Activated naive CD4-positive, alpha-beta T cell treated with anti-CD3 and anti-CD28 coated beads for 36 hours (primary cell): ENCODE measurements at regions of chr13 and their contacts with region 1.

Region 1: GRCh38 chr13:59677966-59678814 is 485.5 kb downstream of the DIAPH3 start:
- DNase-seq: peak; percentile 5
- H3K4me3 Mint-ChIP-seq: no peak overlapping the region
- H3K27ac Mint-ChIP-seq: no peak overlapping the region
- H3K4me1 Mint-ChIP-seq: peaks cover under 1% of the 10 kb centered on the region
- H3K27me3 Mint-ChIP-seq: no peaks in the 10 kb centered on the region

Region 2: DNA sequence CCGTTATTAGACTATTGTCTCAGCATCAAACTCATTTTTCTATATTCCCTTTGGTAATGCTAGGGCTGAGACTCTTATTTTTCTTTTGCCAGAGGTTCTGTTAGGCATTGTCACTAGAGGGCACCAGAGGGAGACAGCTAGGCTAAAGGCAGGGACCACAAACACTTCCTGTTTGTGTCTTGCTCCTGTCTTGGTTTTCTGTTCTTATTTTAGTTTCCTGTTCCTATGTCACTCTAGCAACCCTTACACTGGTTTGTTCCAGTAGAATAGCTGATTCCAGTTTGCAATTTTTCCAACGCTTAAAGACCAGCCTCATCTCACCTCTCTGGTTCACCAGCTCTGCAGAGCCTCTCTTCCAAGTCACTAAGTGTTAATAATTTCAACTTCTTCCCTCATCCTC is 286.5 kb before region 1 on chr13:
- CTCF ChIA-PET with region 1: interaction called, 20 read pairs
- intact Hi-C with region 1: loop called (anchors 1 kb)
- DNase-seq: peak; percentile 72
- H3K4me3 Mint-ChIP-seq: no peak overlapping the region
- H3K27ac Mint-ChIP-seq: no peak overlapping the region
- H3K4me1 Mint-ChIP-seq: no peaks in the 10 kb centered on the region
- H3K27me3 Mint-ChIP-seq: no peaks in the 10 kb centered on the region

Region 3: DNA sequence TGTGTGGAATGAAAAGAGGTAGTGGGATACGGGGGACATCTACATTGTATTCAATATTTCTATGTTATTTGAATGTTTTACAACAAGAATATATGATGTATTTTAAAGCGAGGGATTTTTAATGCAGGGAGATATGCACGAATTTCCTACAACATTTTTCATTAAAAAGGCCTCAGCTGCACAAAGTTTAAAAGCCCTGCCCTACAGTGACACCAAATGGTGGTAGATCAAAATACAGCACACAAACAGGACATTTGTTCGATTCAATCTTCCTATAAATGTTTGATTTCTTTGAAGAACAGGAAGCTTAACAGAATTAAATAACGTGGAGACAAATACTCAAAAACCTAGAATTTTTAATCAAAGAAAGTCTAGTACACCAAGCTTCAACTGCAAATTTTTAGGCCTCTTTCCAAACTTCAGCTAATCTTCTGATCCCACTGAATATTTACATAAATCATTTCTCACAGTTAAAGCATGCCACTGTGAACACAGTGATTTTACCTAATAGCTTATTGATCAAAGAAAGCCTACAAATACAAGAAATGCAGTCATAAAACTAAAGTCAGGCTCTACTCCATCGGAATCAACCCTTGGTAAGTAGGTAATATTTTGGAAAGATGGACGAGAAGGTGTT is 228.3 kb after region 1 on chr13:
- CTCF ChIA-PET with region 1: no interaction called
- intact Hi-C with region 1: loop called (anchors 2 kb)
- DNase-seq: no peak
- H3K4me3 Mint-ChIP-seq: no peak overlapping the region
- H3K27ac Mint-ChIP-seq: no peak overlapping the region
- H3K4me1 Mint-ChIP-seq: no peaks in the 10 kb centered on the region
- H3K27me3 Mint-ChIP-seq: peaks cover 2% of the 10 kb centered on the region

Region 4: DNA sequence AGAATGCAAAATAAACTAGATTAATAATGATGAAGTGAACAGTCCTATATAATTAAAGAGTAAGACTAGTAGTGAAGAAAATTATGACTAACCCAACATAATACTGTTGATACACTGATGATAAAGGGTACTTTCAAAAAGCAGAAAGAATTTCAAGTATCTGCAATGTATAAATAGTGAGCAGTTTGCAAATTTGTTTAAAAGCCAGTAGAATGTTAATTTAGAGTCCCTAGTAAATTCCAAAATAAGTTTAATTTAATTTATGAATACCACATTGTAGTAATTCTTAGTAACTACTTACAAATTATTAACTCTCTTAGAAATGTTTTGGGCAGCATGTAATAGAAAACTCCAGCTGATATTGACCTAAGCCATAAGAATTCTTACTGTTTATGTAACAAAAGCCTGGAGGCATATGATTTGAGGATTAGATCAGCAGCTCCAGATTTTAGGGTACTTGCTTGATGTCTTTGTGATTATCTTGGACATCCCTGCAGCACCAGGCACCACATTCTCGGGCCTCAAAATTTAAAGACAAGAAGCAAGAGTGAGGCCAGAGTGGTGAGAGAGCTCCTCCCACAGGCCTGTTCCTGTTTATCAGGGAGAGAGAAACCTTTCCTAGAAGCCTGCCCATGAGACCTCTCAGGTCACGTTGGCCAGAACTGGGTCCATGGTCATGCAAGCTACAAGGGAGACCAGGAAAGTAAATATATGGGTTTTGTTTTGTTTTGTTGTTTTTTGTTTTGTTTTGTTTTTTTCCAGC is 651.2 kb after region 1 on chr13:
- CTCF ChIA-PET with region 1: interaction called, 9 read pairs
- intact Hi-C with region 1: loop called (anchors 1 kb)
- DNase-seq: peak; percentile 51
- H3K4me3 Mint-ChIP-seq: no peak overlapping the region
- H3K27ac Mint-ChIP-seq: no peak overlapping the region
- H3K4me1 Mint-ChIP-seq: no peaks in the 10 kb centered on the region
- H3K27me3 Mint-ChIP-seq: no peaks in the 10 kb centered on the region

Region 5: DNA sequence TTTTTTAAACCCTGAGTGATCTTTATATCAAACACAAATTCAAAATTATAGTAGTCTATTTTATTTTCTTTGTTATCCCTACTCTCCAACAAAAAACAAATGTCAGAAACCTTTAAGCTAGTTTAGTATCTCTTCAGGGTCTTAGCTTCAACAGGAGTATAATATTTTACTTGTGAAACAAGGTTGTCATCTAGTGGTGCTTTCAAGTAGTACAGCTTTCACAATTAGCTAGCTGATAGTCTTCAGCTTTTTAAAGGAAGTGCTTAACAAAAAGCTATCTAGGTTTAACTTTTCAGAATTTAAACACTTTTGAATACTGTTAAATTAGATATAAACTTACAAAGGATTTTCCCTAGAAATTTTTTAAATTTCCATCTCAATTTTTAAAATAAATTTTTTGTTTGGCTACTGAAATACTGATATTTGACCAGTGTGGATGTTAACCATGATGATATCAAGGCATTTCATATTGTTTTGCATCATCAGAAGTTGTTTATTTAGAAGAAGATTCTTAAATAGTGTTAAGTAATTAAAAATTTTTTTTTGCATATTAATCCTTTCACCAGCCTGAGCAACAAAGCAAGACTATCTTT is 753.0 kb after region 1 on chr13:
- CTCF ChIA-PET with region 1: interaction called, 3 read pairs
- intact Hi-C with region 1: loop called (anchors 1 kb)
- DNase-seq: no peak
- H3K4me3 Mint-ChIP-seq: no peak overlapping the region
- H3K27ac Mint-ChIP-seq: no peak overlapping the region
- H3K4me1 Mint-ChIP-seq: peaks cover 20% of the 10 kb centered on the region
- H3K27me3 Mint-ChIP-seq: no peaks in the 10 kb centered on the region